Naive thymus-derived CD8-positive, alpha-beta T cell (primary cell): ENCODE measurements at regions of chr17 and their contacts with region 1.

Region 1: GRCh38 chr17:50719144-50719923 is at the start of gene LUC7L3:
- DNase-seq: peak; percentile 83 to 95 (median 92)
- ATAC-seq: peak; percentile 91 to 94
- H3K4me3 Mint-ChIP-seq: peak within 1 kb of the TSS; percentile 86 to 99 (median 96)
- H3K27ac Mint-ChIP-seq: peak within 1 kb of the TSS; percentile 95 to 100 (median 99)
- H3K4me1 Mint-ChIP-seq: peaks cover 12 to 41% (median 34%) of the 10 kb centered on the region in 4 donors
- H3K27me3 Mint-ChIP-seq: no peaks in the 10 kb centered on the region
- polyA plus RNA-seq, gene LUC7L3: 41.6 to 58.4 (median 46.0) TPM

Region 2: DNA sequence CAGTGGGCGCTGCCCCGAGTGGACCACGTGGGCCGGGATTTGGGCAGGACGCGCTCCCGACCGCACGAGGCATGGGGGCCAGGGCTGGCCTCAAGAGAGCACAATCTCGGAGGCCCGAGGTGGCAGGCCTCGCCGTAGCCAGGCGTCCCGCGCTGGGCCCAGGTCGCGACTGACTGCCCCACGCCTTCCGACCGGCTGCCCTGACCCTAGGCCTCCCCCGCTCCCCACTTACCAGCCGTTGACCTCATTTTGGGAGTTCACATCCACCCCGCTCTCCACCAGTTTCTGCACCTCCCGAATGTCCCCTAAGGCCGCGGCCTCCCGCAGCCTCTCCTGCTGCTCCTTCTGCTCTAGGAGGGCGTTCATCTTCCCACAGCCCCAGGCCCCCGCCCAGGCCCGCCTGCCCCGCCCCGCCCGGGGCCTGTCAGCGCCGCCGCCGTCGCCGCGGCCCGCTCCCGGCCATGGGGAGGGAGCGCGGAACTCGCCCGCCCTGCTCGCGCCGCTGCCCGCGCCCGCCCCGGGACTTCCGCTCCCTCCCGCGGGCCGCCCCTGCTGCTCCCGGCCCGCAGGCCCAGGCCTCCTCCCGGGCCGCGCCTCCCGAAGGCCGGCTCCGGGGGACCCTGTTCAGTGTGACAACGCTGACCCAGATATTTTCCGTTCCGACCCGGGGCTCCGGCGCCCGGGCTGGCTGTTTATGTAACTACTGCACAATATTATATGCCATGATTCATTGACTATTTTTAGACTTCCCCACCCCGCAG is 11.9 kb before region 1 on chr17 and contains the start of gene ANKRD40:
- POLR2A ChIA-PET with region 1: interaction called, 110 read pairs
- DNase-seq: peak; percentile 78 to 95 (median 90)
- ATAC-seq: peak; percentile 79 to 86
- H3K4me3 Mint-ChIP-seq: peak within 1 kb of the TSS; percentile 91 to 99 (median 96)
- H3K27ac Mint-ChIP-seq: peak within 1 kb of the TSS; percentile 94 to 100 (median 98)
- H3K4me1 Mint-ChIP-seq: peaks cover 24 to 62% (median 48%) of the 10 kb centered on the region in 4 donors
- H3K27me3 Mint-ChIP-seq: no peaks in the 10 kb centered on the region
- polyA plus RNA-seq, gene ANKRD40: 2.8 to 5.2 (median 4.3) TPM

Region 3: GRCh38 chr17:50749245-50749644 is 29.9 kb after region 1 on chr17:
- POLR2A ChIA-PET with region 1: no interaction called
- DNase-seq: no peak
- ATAC-seq: no peak
- H3K4me3 Mint-ChIP-seq: no peak overlapping the region
- H3K27ac Mint-ChIP-seq: peak overlapping the region in 3 of 10 donors; percentile 2 to 83 (median 81)
- H3K4me1 Mint-ChIP-seq: peaks cover 0 to 7% (median 4%) of the 10 kb centered on the region in 4 donors
- H3K27me3 Mint-ChIP-seq: no peaks in the 10 kb centered on the region